ENCODE measurements at regions of chr10 and their contacts with region 1.

Region 1: DNA sequence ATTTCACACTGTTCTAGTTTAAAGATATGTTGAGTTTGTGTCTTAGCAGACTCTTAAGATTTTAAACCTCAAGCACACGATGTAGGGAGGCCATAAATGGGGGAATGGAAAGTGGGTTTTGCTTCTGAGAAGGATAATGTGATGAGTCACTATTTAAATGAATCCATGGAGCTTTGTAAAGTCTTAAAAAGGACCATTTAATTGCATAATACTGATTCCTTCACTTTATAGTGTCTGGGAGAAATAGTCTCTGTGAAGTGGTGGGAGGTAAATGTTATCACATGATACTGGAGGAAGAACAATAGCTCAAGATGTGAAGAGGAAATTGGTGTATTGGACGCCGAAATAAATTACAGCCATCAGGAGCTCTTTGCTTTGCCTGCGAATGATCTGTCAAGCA is 84.0 kb upstream of the MYO3A start:
- DNase-seq: no peak
- H3K4me3 ChIP-seq: no peak overlapping the region
- H3K27ac ChIP-seq: no peak overlapping the region
- H3K4me1 ChIP-seq: no peaks in the 10 kb centered on the region
- H3K27me3 ChIP-seq: no peaks in the 10 kb centered on the region
- CTCF ChIP-seq: no peak

Region 2: GRCh38 chr10:25556466-25556865 is 293.5 kb before region 1 on chr10:
- CTCF ChIA-PET with region 1: no interaction called
- dilution Hi-C with region 1: no loop called
- in situ Hi-C with region 1: no loop called
- intact Hi-C with region 1: no loop called
- DNase-seq: peak; percentile 91
- H3K4me3 ChIP-seq: no peak overlapping the region
- H3K27ac ChIP-seq: no peak overlapping the region
- H3K4me1 ChIP-seq: peaks cover 5% of the 10 kb centered on the region
- H3K27me3 ChIP-seq: peaks cover under 1% of the 10 kb centered on the region
- CTCF ChIP-seq: no peak

Region 3: DNA sequence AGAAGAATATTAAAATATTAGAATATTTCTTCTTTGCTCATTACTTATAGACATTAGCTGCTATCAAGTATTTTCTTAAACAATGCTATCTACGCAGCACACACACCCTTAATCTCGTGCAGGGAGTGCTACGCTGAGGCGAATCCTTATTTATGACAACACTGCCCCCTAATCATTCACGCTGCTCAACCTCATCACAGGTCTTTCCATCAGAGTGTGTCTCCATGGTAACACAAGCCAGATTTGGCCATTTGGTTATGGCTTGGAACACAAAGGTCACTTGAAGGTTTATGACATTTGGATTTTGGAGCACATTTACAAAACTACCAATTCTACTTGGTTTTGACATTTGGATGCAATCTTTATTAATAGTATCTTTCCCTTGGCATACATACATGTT is 38.6 kb after region 1 on chr10:
- CTCF ChIA-PET with region 1: no interaction called
- dilution Hi-C with region 1: loop called (anchors 5 kb)
- in situ Hi-C with region 1: no loop called
- intact Hi-C with region 1: no loop called
- DNase-seq: no peak
- H3K4me3 ChIP-seq: no peak overlapping the region
- H3K27ac ChIP-seq: no peak overlapping the region
- H3K4me1 ChIP-seq: no peaks in the 10 kb centered on the region
- H3K27me3 ChIP-seq: no peaks in the 10 kb centered on the region
- CTCF ChIP-seq: no peak

Measured in mammary epithelial cell (primary cell).